Heart left ventricle (tissue), 16 donors: ENCODE measurements at regions of chr19 and their contacts with region 1.

Region 1: GRCh38 chr19:30649934-30650614 is 277.9 kb downstream of the ZNF536 start:
- DNase-seq: no peak
- ATAC-seq: peak in 2 of 4 donors; percentile 18 to 45
- H3K4me3 ChIP-seq: no peak overlapping the region
- H3K27ac ChIP-seq: no peak overlapping the region
- H3K4me1 ChIP-seq: peaks cover 0 to 3% (median 0%) of the 10 kb centered on the region in 12 donors
- H3K27me3 ChIP-seq: peaks cover 0 to 57% (median 12%) of the 10 kb centered on the region in 9 donors
- CTCF ChIP-seq: peak; percentile 54 to 86 (median 78)
- POLR2A ChIP-seq: no peak

Region 2: DNA sequence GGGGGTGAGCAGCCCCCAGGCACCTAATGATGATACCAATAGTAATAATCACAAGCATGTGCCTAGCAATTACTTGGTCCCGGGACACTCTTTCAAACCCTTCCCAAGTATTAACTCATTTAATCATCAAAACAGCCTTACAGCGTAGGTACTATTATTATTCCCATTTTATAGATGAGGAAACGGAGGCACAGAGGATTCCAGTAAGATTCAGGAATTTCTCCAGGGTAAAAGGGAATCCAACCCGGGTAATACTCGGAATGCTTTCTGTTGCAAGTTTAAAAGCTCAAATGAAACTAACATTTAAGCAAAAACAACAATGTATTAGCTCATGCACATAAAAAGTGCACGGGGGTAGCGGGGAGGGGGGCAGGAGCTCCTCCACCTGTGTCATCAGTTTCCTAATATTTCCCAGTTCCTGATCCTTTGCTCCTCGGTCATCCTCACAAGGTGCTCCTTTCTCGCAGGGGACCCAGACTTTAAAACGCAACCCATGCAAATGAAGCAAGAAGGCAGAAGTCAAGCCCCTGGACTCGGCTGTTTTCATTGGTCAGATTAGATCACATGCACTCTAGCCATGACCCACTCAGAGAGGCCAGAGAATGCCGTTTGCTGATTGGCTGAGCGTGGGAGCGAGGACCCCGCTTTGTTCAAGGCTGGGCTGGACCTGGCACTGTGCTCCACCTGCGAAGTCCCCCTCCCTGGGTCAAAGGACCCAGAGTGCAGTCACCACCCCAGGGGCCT is 896.7 kb before region 1 on chr19:
- intact Hi-C with region 1: loop called in 1 of 10 experiments (anchors 10 kb)
- DNase-seq: no peak
- ATAC-seq: no peak
- H3K4me3 ChIP-seq: no peak overlapping the region
- H3K27ac ChIP-seq: no peak overlapping the region
- H3K4me1 ChIP-seq: no peaks in the 10 kb centered on the region
- H3K27me3 ChIP-seq: peaks cover 0 to 13% (median 0%) of the 10 kb centered on the region in 9 donors
- CTCF ChIP-seq: no peak
- POLR2A ChIP-seq: no peak

Region 3: DNA sequence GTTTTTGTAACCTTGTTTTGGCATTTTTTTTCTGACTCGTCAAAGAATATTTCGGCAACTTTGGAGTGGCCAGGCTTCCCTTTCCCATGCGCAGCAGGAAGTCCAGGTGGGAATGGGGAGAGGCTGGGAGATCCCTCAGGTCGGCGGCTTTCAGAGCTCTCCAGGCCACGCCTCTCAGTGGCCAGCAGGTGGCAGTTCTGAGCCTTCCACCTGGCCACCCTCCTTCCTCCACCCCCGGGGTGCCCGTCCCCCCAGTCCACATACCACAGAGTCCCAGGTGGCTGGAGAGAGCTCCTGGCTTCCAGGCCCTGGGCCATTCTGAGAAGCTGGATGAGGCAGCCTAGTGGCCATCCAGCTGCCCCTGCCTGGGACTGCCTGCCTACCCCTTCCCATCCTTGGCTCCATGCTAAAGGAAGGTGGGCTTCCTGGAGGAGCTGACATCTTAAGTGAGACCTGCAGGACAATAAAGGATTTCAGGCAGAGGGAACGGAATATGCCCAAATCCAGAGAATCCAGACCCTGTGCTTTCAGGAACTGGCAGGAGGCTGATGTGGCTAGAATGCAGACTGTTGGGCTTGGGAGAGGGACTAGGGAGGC is 792.0 kb before region 1 on chr19:
- intact Hi-C with region 1: loop called in 2 of 10 experiments (anchors 10 kb)
- DNase-seq: no peak
- ATAC-seq: peak in 3 of 4 donors; percentile 56 to 61 (median 60)
- H3K4me3 ChIP-seq: no peak overlapping the region
- H3K27ac ChIP-seq: no peak overlapping the region
- H3K4me1 ChIP-seq: no peaks in the 10 kb centered on the region
- H3K27me3 ChIP-seq: peaks cover 0 to 47% (median 4%) of the 10 kb centered on the region in 9 donors
- CTCF ChIP-seq: peak; percentile 22 to 61 (median 45)
- POLR2A ChIP-seq: no peak

Region 4: DNA sequence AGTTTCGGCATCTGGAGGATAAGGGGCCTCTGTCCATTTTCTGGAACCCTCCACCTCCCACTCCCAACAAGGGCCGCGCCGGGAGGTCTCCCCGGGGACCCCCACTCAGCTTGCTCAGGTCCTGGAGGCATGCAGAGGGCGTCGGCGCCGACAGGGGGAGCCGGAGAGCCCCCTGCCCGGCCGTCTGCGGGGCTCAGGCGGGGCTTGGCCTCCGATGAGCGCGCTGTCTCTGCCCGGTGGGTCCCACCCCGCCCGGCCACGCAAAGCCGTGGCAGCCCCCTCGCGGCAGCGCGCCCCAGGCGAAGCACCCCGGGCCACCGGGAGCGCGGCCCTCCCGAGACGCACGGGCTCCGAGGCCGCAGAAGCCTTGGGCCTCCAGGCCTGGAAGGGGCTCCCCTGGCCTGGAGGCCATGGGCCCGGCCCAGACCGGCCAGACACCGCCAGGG is 427.6 kb before region 1 on chr19:
- intact Hi-C with region 1: loop called in 9 of 10 experiments (anchors 2 to 10 kb)
- DNase-seq: no peak
- ATAC-seq: peak in 3 of 4 donors; percentile 43 to 52 (median 50)
- H3K4me3 ChIP-seq: peak overlapping the region in 2 of 12 donors; percentile 27 to 29
- H3K27ac ChIP-seq: no peak overlapping the region
- H3K4me1 ChIP-seq: peaks cover 0 to 39% (median 12%) of the 10 kb centered on the region in 12 donors
- H3K27me3 ChIP-seq: peaks cover 10 to 69% (median 48%) of the 10 kb centered on the region in 9 donors
- CTCF ChIP-seq: peak; percentile 54 to 78 (median 66)
- POLR2A ChIP-seq: no peak

Region 5: DNA sequence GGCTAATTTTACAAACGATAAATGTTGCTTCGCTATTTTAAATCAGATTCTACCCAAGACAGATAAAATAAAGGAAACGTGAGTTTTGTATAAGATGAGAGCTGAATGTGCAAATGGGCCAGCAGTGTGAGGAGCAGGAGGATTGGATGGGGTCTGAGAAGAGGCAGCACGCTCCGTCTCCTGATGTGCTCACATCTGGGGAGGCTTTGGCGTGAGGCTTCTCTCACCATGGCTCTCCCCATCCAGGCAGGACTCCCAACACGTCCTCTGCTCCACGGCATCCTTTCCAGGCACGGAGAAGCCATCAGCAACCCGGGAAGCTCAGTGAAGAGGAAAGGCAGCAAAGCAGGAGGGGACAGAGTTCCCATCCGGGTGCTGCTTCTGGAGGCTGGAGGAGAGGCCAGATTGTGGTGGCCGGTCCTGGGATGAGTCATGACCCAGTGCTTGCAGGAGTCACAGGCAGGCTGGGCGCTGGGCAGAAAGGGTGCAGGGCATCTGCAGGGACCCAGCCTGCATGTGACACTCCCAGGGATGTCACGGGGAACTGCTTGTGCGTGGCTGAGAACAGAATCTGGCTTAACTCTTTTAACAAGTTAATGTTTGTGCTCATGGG is 230.4 kb before region 1 on chr19:
- intact Hi-C with region 1: loop called in 1 of 10 experiments (anchors 10 kb)
- DNase-seq: no peak
- ATAC-seq: peak in 2 of 4 donors; percentile 37 to 41
- H3K4me3 ChIP-seq: no peak overlapping the region
- H3K27ac ChIP-seq: no peak overlapping the region
- H3K4me1 ChIP-seq: no peaks in the 10 kb centered on the region
- H3K27me3 ChIP-seq: peaks cover 0 to 14% (median 0%) of the 10 kb centered on the region in 9 donors
- CTCF ChIP-seq: no peak
- POLR2A ChIP-seq: no peak

Region 6: GRCh38 chr19:30669329-30670010 is 19.4 kb after region 1 on chr19:
- intact Hi-C with region 1: no loop called
- DNase-seq: peak; percentile 30 to 84 (median 57)
- ATAC-seq: peak in 3 of 4 donors; percentile 12 to 26 (median 21)
- H3K4me3 ChIP-seq: no peak overlapping the region
- H3K27ac ChIP-seq: no peak overlapping the region
- H3K4me1 ChIP-seq: peaks cover 0 to 25% (median 6%) of the 10 kb centered on the region in 12 donors
- H3K27me3 ChIP-seq: peaks cover 0 to 36% (median 11%) of the 10 kb centered on the region in 9 donors
- CTCF ChIP-seq: peak; percentile 61 to 85 (median 81)
- POLR2A ChIP-seq: no peak

Region 7: GRCh38 chr19:30696514-30696913 is 46.4 kb after region 1 on chr19:
- intact Hi-C with region 1: no loop called
- DNase-seq: peak in 1 of 5 donors; percentile 30
- ATAC-seq: peak in 2 of 4 donors; percentile 38 to 55
- H3K4me3 ChIP-seq: no peak overlapping the region
- H3K27ac ChIP-seq: no peak overlapping the region
- H3K4me1 ChIP-seq: peaks cover 0 to 14% (median 0%) of the 10 kb centered on the region in 12 donors
- H3K27me3 ChIP-seq: peaks cover 0 to 14% (median 7%) of the 10 kb centered on the region in 9 donors
- CTCF ChIP-seq: peak in 10 of 12 donors; percentile 20 to 51 (median 27)
- POLR2A ChIP-seq: no peak